ENCODE measurements at regions of chr9 and their contacts with region 1.

Region 1: DNA sequence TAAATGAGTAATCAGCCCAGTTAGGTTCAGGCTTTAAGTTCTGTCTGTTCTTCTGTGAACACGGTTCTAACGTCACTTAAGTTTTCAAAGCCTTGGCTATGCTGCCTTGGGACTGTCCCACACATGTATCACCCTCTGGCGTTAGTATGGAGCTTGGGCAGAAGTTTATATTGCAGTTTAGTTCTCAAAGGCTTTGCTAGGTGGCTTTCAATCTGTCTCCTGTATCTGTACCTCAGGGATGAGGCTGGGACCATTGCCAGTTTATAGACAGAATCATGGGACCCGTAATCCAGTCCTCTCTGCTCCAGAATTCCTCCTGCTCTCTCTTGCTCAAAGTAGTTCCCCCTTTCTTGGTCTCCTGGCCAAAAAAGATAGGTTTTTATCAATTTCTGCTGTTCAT is 12.1 kb downstream of the C9orf40 start:
- DNase-seq: peak; percentile 85
- ATAC-seq: peak; percentile 100
- H3K4me3 ChIP-seq: peak overlapping the region; percentile 12 to 50 (median 13); a peak in 4 of 6 replicates
- H3K27ac ChIP-seq: no peak overlapping the region
- H3K4me1 ChIP-seq: peaks cover 40% of the 10 kb centered on the region
- H3K27me3 ChIP-seq: no peaks in the 10 kb centered on the region
- CTCF ChIP-seq: peak; percentile 76
- EP300 ChIP-seq: no peak
- POLR2A ChIP-seq: no peak
- RAD21 ChIP-seq: peak; percentile 64

Region 2: GRCh38 chr9:74696520-74696919 is 244.1 kb before region 1 on chr9:
- CTCF ChIA-PET with region 1: no interaction called
- POLR2A ChIA-PET with region 1: no interaction called
- in situ Hi-C with region 1: no loop called
- intact Hi-C with region 1: no loop called
- DNase-seq: no peak
- ATAC-seq: peak; percentile 65
- H3K4me3 ChIP-seq: no peak overlapping the region
- H3K27ac ChIP-seq: no peak overlapping the region
- H3K4me1 ChIP-seq: no peaks in the 10 kb centered on the region
- H3K27me3 ChIP-seq: no peaks in the 10 kb centered on the region
- CTCF ChIP-seq: no peak
- EP300 ChIP-seq: no peak
- POLR2A ChIP-seq: no peak
- RAD21 ChIP-seq: no peak

Region 3: DNA sequence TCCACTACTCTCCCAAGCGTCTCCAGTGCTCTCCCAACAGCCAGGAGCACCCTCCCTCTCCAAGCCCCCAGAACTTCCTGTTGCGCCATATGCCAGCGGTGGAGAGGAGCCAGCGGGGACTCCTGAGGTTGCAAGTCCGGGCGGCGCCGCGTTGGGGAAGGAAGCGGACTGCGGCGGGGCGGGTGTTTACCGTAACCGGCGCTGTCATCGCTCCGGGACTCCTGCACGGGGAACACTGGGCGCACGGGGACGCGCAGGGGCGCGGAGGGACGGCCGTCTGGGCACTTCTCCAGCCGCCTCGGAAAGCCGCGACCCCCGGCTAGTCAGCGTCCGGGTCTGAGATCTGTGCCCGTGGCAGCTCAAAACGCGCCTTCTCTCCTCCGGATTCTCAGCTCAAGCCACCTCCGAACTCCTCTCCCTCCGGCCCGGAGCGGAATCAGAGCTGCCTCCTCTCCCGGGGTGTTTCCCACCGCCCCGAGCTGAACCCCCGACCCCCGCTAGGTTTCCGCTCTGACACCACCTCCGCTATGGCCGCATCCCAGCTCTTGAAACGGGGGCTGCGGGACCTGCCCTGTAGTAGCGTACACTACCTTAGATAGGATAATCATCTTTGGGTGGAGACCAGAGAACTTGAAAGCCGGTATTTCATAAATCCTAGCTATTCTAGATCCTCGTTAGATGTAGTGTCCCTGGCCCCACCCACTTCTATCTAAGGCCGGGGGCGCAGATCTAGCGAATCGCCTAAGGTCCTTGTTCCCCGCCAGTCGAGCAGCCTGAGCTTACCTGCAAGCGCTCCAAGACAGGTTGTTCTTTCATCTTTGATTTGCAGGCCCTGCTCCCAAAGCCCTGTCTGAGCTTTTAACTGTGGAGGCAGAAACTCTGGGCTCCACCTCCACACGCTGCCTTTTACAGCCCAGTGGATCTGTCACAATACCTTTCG is 53.3 kb before region 1 on chr9 and contains the start of gene TRPM6:
- CTCF ChIA-PET with region 1: no interaction called
- POLR2A ChIA-PET with region 1: no interaction called
- in situ Hi-C with region 1: no loop called
- intact Hi-C with region 1: loop called (anchors 1 kb)
- DNase-seq: peak; percentile 66
- ATAC-seq: peak; percentile 95
- H3K4me3 ChIP-seq: peak within 1 kb of the TSS; percentile 49 to 78 (median 73)
- H3K27ac ChIP-seq: no peak within 1 kb of the TSS
- H3K4me1 ChIP-seq: peaks cover 15% of the 10 kb centered on the region
- H3K27me3 ChIP-seq: no peaks in the 10 kb centered on the region
- CTCF ChIP-seq: no peak
- EP300 ChIP-seq: no peak
- POLR2A ChIP-seq: no peak
- RAD21 ChIP-seq: peak; percentile 18; the same call in 1 of the 2 replicates
- total RNA-seq, gene TRPM6: 0.09 and 0.14 TPM in 2 replicates

Region 4: DNA sequence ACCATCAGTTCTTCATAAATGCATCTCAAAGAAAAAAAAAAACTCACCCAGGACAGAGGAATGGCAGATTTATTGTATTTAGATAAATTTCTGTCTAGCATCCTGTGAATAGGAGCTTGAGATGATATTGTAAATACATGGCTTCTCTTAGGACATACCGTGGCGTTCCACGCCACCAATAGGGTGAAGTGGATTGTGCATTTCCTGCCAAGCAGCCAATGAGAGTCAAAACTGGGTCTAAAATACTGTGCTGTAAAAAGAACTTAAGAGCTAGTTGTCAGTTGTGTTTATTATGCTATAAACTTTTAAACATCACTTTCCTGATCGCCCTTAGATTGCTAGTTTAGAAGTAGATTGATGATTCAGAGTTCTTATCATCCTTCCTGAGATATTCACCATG is 31.9 kb before region 1 on chr9:
- CTCF ChIA-PET with region 1: no interaction called
- POLR2A ChIA-PET with region 1: no interaction called
- in situ Hi-C with region 1: no loop called
- intact Hi-C with region 1: no loop called
- DNase-seq: no peak
- ATAC-seq: no peak
- H3K4me3 ChIP-seq: no peak overlapping the region
- H3K27ac ChIP-seq: no peak overlapping the region
- H3K4me1 ChIP-seq: no peaks in the 10 kb centered on the region
- H3K27me3 ChIP-seq: no peaks in the 10 kb centered on the region
- CTCF ChIP-seq: no peak
- EP300 ChIP-seq: no peak
- POLR2A ChIP-seq: no peak
- RAD21 ChIP-seq: no peak

Region 5: DNA sequence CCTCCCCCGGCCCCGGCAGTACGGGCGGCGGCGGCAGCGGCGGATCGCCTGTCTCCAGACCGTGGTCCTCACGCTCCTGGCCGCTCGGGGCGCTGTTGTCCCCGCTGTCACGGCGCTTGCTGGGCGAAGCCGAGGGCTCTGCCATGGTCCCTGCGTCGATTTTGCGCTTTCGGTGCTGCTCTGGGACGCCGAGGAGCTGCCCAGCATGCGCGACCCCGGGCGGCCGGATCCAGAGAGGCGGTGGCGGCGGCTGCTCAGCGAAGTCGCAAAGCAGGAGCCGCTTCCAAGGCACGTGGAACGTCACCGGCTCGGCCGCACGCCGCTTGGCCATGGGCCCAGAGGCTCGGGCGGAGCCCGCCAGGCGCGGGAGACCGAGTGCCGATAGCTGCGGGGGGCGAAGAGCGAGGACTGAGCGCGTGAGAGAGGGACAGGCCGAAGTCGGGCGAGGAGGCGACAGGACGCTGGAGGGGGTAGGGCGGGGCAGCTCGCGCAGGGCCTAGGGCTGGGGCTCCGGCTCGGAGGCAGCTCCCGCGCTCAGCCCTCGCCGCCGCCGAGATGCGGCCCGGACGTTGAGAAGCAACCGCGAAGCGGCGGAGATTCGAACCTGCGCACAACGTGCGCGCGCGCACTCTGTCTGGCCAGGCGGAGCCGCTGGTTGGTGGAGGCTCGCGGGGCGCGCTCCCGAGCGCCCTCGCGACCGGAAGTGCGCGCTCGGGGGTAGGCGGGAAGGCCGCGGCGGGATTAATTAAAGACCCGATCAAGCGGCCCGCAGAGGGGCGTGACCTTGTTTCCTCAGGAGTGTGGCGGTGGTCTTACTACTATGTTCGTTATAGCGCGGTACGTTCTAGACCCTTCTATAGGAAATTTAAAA is 11.9 kb after region 1 on chr9 and contains the start of gene C9orf40:
- CTCF ChIA-PET with region 1: interaction called, 3 read pairs
- POLR2A ChIA-PET with region 1: interaction called, 11 read pairs
- in situ Hi-C with region 1: no loop called
- intact Hi-C with region 1: no loop called
- DNase-seq: peak; percentile 70
- ATAC-seq: peak; percentile 96
- H3K4me3 ChIP-seq: peak within 1 kb of the TSS; percentile 89 to 97 (median 89)
- H3K27ac ChIP-seq: peak within 1 kb of the TSS; percentile 99
- H3K4me1 ChIP-seq: peaks cover 33% of the 10 kb centered on the region
- H3K27me3 ChIP-seq: no peaks in the 10 kb centered on the region; a peak in 1 of 5 replicates
- CTCF ChIP-seq: peak; percentile 91
- EP300 ChIP-seq: no peak
- POLR2A ChIP-seq: peak; percentile 42 to 67; a peak in 3 of 4 replicates
- RAD21 ChIP-seq: peak; percentile 63
- total RNA-seq, gene C9orf40: 13.5 and 16.5 TPM in 2 replicates

Region 6: GRCh38 chr9:74985041-74985440 is 44.4 kb after region 1 on chr9:
- CTCF ChIA-PET with region 1: no interaction called
- POLR2A ChIA-PET with region 1: no interaction called
- in situ Hi-C with region 1: no loop called
- intact Hi-C with region 1: no loop called
- DNase-seq: no peak
- ATAC-seq: no peak
- H3K4me3 ChIP-seq: no peak overlapping the region
- H3K27ac ChIP-seq: no peak overlapping the region
- H3K4me1 ChIP-seq: no peaks in the 10 kb centered on the region
- H3K27me3 ChIP-seq: no peaks in the 10 kb centered on the region
- CTCF ChIP-seq: no peak
- EP300 ChIP-seq: no peak
- POLR2A ChIP-seq: no peak
- RAD21 ChIP-seq: no peak

Region 7: GRCh38 chr9:75001719-75002422 is 61.3 kb after region 1 on chr9:
- CTCF ChIA-PET with region 1: interaction called, 20 read pairs
- POLR2A ChIA-PET with region 1: no interaction called
- in situ Hi-C with region 1: no loop called
- intact Hi-C with region 1: loop called (anchors 1 kb)
- DNase-seq: peak; percentile 99
- ATAC-seq: peak; percentile 99
- H3K4me3 ChIP-seq: peak overlapping the region in 2 of 3 experiments; percentile 15 to 43; a peak in 3 of 6 replicates
- H3K27ac ChIP-seq: peak overlapping the region; percentile 91
- H3K4me1 ChIP-seq: peaks cover 38% of the 10 kb centered on the region
- H3K27me3 ChIP-seq: no peaks in the 10 kb centered on the region
- CTCF ChIP-seq: peak; percentile 90
- EP300 ChIP-seq: peak in 1 of 2 experiments; percentile 94; a peak in 2 of 4 replicates
- POLR2A ChIP-seq: 0 out of 4 replicates have a peak, but pooled peaks of 1 of the 2 experiments have one; percentile 46
- RAD21 ChIP-seq: peak; percentile 89

Region 8: GRCh38 chr9:75071530-75072124 is 131.0 kb after region 1 on chr9:
- CTCF ChIA-PET with region 1: interaction called, 10 read pairs
- POLR2A ChIA-PET with region 1: no interaction called
- in situ Hi-C with region 1: no loop called
- intact Hi-C with region 1: loop called (anchors 5 kb)
- DNase-seq: no peak
- ATAC-seq: no peak
- H3K4me3 ChIP-seq: no peak overlapping the region
- H3K27ac ChIP-seq: no peak overlapping the region
- H3K4me1 ChIP-seq: no peaks in the 10 kb centered on the region
- H3K27me3 ChIP-seq: no peaks in the 10 kb centered on the region
- CTCF ChIP-seq: no peak
- EP300 ChIP-seq: no peak
- POLR2A ChIP-seq: no peak
- RAD21 ChIP-seq: no peak

Measured in HepG2 (cell line).